ENCODE measurements at regions of chr6 and their contacts with region 1.

Region 1: DNA sequence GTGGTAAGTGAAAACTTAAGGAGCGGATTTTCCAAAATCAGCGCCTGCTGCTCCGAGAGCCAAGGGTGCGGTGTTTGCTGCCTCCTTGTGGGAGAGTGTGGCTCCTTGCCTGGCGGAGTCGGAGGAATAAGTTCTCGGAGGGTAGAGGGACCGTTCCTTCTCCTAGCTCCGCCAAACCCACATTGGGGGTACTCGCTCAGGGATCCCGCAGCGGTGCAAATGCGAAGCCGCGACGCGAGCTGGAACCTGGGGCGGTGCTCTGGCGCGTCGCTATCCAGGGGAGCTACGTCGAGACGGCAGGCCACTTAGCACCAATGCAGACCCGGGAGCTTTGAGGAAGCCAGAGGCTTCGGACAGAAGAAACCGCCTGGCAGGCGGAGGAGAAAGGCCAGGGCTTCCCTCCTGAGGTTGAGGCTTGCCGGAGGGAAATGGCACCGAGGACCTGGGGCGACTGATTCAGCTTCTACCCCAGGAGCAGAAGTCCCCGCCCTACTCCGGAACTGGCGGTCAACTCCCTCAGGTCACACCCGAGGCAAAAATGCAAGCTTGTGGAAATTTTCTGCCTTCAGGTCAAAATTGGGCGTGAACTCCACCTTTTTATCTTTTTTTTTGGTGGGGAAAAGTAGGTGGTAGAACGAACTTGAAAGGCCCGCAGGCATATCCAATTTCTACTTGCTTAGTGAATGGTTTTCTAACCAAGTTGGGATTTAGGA is 5.7 kb upstream of the DDX43 start:
- DNase-seq: no peak
- ATAC-seq: peak; percentile 92
- H3K4me3 ChIP-seq: peak overlapping the region; percentile 51
- H3K27ac ChIP-seq: no peak overlapping the region
- H3K4me1 ChIP-seq: no peaks in the 10 kb centered on the region
- H3K27me3 ChIP-seq: no peaks in the 10 kb centered on the region
- CTCF ChIP-seq: peak; percentile 60 to 80 (median 65)
- EP300 ChIP-seq: no peak
- POLR2A ChIP-seq: peak; percentile 33; the same call in 1 of the 2 replicates
- RAD21 ChIP-seq: peak; percentile 65

Region 2: GRCh38 chr6:73248192-73248903 is 140.6 kb before region 1 on chr6:
- CTCF ChIA-PET with region 1: no interaction called
- POLR2A ChIA-PET with region 1: no interaction called
- RAD21 ChIA-PET with region 1: no interaction called
- SMC1A ChIA-PET with region 1: no interaction called
- in situ Hi-C with region 1: no loop called
- intact Hi-C with region 1: no loop called
- DNase-seq: no peak
- ATAC-seq: no peak
- H3K4me3 ChIP-seq: no peak overlapping the region
- H3K27ac ChIP-seq: no peak overlapping the region
- H3K4me1 ChIP-seq: no peaks in the 10 kb centered on the region
- H3K27me3 ChIP-seq: no peaks in the 10 kb centered on the region; a peak in 1 of 4 replicates
- CTCF ChIP-seq: no peak
- EP300 ChIP-seq: no peak
- POLR2A ChIP-seq: no peak
- RAD21 ChIP-seq: no peak

Region 3: DNA sequence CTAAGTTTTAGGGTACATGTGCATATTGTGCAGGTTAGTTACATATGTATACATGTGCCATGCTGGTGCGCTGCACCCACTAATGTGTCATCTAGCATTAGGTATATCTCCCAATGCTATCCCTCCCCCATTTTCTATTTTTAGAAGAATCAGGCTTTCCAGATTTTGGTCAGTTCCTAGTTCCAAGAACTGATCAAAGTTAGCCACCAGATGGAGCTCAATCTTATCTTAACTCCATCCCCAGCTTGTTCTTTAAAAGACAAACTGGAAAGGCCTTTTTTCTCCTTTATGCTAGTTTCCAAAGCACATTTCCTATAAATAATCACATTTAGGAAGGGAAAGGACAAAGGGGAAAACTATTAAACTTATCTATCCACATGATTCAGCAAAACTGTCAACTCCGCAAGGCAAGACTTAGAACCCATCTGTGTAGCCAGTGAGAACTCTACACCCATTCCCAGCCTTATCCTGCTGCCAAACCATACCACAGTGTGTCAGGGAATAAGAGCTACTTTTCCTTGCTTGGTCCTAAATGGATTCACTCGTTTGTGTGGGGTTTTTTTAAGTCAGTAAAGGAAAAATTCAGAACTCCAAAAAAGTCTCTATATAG is 103.2 kb before region 1 on chr6:
- CTCF ChIA-PET with region 1: interaction called, 22 read pairs
- POLR2A ChIA-PET with region 1: no interaction called
- RAD21 ChIA-PET with region 1: interaction called, 6 read pairs
- SMC1A ChIA-PET with region 1: no interaction called
- in situ Hi-C with region 1: no loop called
- intact Hi-C with region 1: no loop called
- DNase-seq: no peak
- ATAC-seq: peak; percentile 48; the same call in 2 of the 3 replicates
- H3K4me3 ChIP-seq: no peak overlapping the region
- H3K27ac ChIP-seq: no peak overlapping the region
- H3K4me1 ChIP-seq: no peaks in the 10 kb centered on the region; the same call in 1 of the 2 replicates
- H3K27me3 ChIP-seq: no peaks in the 10 kb centered on the region
- CTCF ChIP-seq: peak; percentile 17 to 38 (median 25); a peak in 3 of 6 replicates
- EP300 ChIP-seq: no peak
- POLR2A ChIP-seq: no peak
- RAD21 ChIP-seq: peak; percentile 50

Region 4: DNA sequence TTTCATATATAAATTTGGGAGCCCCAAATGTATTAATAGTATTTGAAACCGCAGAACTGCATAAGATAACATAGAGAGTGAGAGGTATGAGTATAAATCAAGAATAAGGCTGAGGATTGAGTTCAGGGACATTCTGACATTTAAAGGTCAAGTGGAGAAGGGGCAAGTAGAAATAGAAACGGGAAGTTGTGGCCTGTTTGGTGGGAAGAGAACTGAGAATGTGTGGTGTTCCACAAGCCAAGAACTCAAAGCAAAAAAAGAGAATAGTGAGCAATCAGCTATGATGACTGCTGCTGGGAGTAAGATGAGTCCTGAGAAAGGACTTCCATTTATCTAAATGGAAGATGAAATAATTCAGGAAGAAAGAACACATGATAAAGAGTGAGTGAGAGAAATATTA is 725.5 kb after region 1 on chr6:
- CTCF ChIA-PET with region 1: no interaction called
- POLR2A ChIA-PET with region 1: no interaction called
- RAD21 ChIA-PET with region 1: no interaction called
- SMC1A ChIA-PET with region 1: no interaction called
- in situ Hi-C with region 1: no loop called
- intact Hi-C with region 1: no loop called
- DNase-seq: no peak
- ATAC-seq: no peak
- H3K4me3 ChIP-seq: no peak overlapping the region
- H3K27ac ChIP-seq: no peak overlapping the region
- H3K4me1 ChIP-seq: no peaks in the 10 kb centered on the region
- H3K27me3 ChIP-seq: no peaks in the 10 kb centered on the region
- CTCF ChIP-seq: no peak
- EP300 ChIP-seq: no peak
- POLR2A ChIP-seq: no peak
- RAD21 ChIP-seq: no peak